OCI-LY7 (cell line): ENCODE measurements at regions of chr3 and their contacts with region 1.

Region 1: GRCh38 chr3:56837196-56837955 is 35.6 kb upstream of the ARHGEF3 start:
- DNase-seq: peak; percentile 78
- H3K4me3 ChIP-seq: no peak overlapping the region
- H3K27ac ChIP-seq: peak overlapping the region; percentile 52
- H3K4me1 ChIP-seq: peaks cover 29% of the 10 kb centered on the region
- CTCF ChIP-seq: no peak

Region 2: DNA sequence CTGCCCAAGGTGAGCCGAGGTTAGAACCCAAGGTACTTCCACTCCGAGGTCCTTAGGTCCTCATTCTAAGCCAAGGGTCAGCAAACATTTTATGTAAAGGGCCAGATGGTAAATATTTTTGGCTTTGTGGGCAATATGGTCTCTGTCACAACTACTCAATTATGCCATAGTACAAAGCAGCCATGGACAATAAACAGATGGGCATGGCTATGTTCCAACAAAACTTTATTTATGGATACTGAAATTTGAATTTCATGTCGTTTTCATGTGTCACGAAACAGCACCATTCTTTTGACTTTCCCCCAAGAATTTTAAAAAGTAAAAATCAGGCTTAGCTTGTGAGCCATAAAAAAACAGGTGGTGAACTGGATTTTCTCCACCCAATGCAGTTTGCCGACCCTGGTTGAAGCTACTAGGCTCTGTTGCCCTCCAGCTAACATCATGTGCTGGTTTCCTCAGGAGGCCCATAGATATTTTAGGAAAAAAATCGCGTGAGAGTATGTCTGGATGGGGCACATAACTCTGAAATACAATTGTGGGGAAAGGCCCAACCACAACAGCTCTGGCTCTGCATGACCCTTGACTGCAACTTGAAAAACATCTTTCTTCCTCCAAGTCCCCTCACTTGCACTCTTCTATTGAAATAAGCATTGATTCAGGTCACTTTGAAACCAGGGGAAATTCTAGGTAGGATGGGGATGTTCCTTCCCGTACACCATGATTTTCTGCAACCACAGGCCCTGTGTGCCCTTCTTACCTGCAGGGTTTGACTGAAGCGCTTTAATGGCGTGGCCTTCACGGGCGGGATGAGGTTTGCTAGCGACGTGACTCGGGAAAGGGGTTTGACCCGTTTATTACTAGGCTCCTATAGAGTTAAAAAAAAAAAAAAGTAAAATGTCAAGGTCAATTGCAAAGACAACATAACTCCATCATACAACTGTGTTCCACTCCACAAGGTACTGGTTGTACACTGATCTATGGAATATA is 64.1 kb before region 1 on chr3:
- CTCF ChIA-PET with region 1: no interaction called
- POLR2A ChIA-PET with region 1: no interaction called
- intact Hi-C with region 1: no loop called
- DNase-seq: no peak
- H3K4me3 ChIP-seq: no peak overlapping the region
- H3K27ac ChIP-seq: no peak overlapping the region
- H3K4me1 ChIP-seq: peaks cover 5% of the 10 kb centered on the region
- CTCF ChIP-seq: no peak

Region 3: DNA sequence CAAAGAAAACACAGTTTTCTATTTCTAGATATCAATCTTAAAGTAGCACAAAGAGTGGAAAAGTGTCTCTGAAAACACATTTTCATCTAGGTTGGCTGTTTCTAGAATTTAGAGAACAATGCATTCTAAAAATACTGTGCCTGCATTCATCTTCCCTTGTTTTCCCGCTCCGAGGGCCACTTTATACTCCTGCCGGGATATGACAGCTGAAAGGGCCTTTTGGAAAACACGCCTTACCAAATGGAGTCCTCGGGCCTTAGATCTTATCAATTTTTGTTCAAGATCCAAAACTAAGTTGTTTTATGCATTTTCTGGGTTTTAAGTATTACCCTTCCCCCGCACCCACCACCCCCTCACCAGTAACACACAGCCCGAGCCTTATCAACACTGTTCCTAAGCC is 12.3 kb after region 1 on chr3:
- CTCF ChIA-PET with region 1: no interaction called
- POLR2A ChIA-PET with region 1: interaction called, 27 read pairs
- intact Hi-C with region 1: no loop called
- DNase-seq: no peak
- H3K4me3 ChIP-seq: no peak overlapping the region
- H3K27ac ChIP-seq: no peak overlapping the region
- H3K4me1 ChIP-seq: peaks cover 19% of the 10 kb centered on the region
- CTCF ChIP-seq: no peak